PC-9 (cell line): ENCODE measurements at regions of chr1 and their contacts with region 1.

Region 1: DNA sequence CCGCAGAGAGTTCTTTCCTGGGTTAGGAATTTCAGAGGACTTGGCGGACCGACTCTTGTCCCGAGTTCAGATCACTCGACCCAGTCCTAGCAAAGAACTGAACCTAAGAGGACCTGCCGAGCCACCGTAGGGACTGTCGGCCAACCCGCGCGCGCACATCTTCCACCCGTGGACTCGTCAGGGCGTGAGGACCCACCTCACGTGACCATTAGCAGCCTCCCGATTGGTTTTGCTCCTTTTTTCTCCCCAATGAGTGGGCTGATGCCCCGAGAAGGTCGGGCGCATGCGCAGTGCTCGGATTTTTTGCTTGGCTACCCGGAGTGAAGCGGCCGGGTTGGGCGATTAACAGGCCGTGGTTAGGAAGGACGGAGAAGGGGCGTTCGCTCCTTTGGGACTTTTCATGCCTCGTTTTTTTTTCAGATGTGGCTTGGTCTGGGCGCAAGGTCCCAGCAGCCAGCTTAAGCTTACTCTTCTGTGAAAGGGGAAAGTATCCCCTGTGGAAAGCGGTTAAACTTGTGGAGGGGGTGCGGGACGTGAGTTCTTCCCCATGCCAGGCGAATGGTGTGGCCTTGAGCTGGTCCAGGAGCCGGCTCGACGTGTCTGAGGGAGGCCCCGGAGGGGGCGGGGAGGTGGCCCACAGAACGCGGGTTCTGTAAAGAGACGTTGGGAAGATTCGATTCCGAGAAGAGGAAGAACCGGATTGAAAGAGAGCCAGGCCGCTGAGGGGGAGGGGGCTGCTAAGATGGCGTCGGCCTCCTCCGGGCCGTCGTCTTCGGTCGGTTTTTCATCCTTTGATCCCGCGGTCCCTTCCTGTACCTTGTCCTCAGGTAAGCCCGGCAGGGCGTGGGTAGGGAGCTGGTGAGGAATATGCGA is at the start of gene PIP5K1A:
- DNase-seq: peak; percentile 88 to 95
- H3K4me3 ChIP-seq: peak within 1 kb of the TSS; percentile 85
- H3K27ac ChIP-seq: peak within 1 kb of the TSS; percentile 93
- H3K4me1 ChIP-seq: peaks cover 38% of the 10 kb centered on the region
- H3K27me3 ChIP-seq: no peaks in the 10 kb centered on the region
- CTCF ChIP-seq: no peak
- total RNA-seq, gene PIP5K1A: 69.7 and 76.4 TPM in 2 replicates

Region 2: DNA sequence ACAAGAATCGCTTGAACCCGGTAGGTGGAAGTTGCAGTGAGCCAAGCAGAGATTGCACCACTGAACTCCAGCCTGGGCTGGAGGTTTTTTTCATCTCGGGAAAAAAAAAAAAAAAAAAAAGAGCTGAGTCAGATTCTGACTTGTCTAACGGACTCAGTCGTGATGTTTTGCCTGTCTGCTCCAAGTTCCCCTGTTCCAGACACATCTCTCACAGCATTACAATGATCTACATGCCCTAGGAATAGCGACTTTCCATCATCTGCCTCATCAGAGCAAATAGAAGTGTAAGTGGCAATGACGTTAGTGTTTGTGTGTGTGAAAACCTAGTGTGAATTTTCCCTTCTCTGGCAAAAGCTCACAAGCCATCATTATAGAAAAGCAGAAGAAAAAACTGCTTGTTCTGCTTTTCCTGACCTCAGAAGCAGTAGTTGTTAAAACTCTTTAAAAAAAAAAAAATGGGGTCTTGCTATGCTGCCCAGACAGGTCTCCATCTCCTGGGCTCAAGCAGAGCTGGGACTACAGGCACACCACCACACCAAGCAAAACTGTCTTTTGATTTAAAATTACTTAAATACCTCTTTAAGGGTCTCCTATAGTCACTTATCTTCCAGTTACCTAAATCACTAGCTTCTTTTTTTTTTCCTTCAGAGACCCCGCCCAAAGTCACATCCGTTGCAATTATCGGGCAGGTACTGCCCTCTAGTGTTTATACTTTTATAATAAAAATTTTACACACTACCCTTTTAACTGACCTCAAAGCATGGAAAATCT is 1011.5 kb before region 1 on chr1:
- CTCF ChIA-PET with region 1: no interaction called
- POLR2A ChIA-PET with region 1: interaction called, 21 read pairs
- intact Hi-C with region 1: no loop called
- DNase-seq: peak in 1 of 2 experiments; percentile 56
- H3K4me3 ChIP-seq: peak overlapping the region; percentile 37; the same call in 1 of the 2 replicates
- H3K27ac ChIP-seq: peak overlapping the region; percentile 77
- H3K4me1 ChIP-seq: peaks cover 13% of the 10 kb centered on the region; the same call in 1 of the 2 replicates
- H3K27me3 ChIP-seq: no peaks in the 10 kb centered on the region
- CTCF ChIP-seq: peak; percentile 87

Region 3: GRCh38 chr1:151254217-151255213 is 56.0 kb after region 1 on chr1 and contains the start of gene PSMD4:
- CTCF ChIA-PET with region 1: interaction called, 8 read pairs
- POLR2A ChIA-PET with region 1: interaction called, 3 read pairs
- intact Hi-C with region 1: loop called (anchors 1 kb)
- DNase-seq: peak; percentile 93 to 95
- H3K4me3 ChIP-seq: peak within 1 kb of the TSS; percentile 76
- H3K27ac ChIP-seq: peak within 1 kb of the TSS; percentile 57
- H3K4me1 ChIP-seq: peaks cover 7% of the 10 kb centered on the region
- H3K27me3 ChIP-seq: no peaks in the 10 kb centered on the region
- CTCF ChIP-seq: no peak
- total RNA-seq, gene PSMD4: 230 and 255 TPM in 2 replicates

Region 4: GRCh38 chr1:151340870-151341754 is 142.6 kb after region 1 on chr1:
- CTCF ChIA-PET with region 1: interaction called, 10 read pairs
- POLR2A ChIA-PET with region 1: interaction called, 3 read pairs
- intact Hi-C with region 1: loop called (anchors 5 kb)
- DNase-seq: peak; percentile 41 to 76
- H3K4me3 ChIP-seq: no peak overlapping the region
- H3K27ac ChIP-seq: peak overlapping the region; percentile 32
- H3K4me1 ChIP-seq: peaks cover 2% of the 10 kb centered on the region; the same call in 1 of the 2 replicates
- H3K27me3 ChIP-seq: no peaks in the 10 kb centered on the region
- CTCF ChIP-seq: peak; percentile 85

Region 5: GRCh38 chr1:151539990-151540981 is 341.8 kb after region 1 on chr1 and contains the start of gene TUFT1:
- CTCF ChIA-PET with region 1: no interaction called
- POLR2A ChIA-PET with region 1: interaction called, 4 read pairs
- intact Hi-C with region 1: loop called (anchors 10 kb)
- DNase-seq: peak; percentile 85 to 95
- H3K4me3 ChIP-seq: peak within 1 kb of the TSS; percentile 92
- H3K27ac ChIP-seq: peak within 1 kb of the TSS; percentile 95
- H3K4me1 ChIP-seq: peaks cover 60% of the 10 kb centered on the region
- H3K27me3 ChIP-seq: no peaks in the 10 kb centered on the region
- CTCF ChIP-seq: no peak
- total RNA-seq, gene TUFT1: 35.3 and 40.2 TPM in 2 replicates